ENCODE measurements at regions of chr21 and their contacts with region 1.

Region 1: DNA sequence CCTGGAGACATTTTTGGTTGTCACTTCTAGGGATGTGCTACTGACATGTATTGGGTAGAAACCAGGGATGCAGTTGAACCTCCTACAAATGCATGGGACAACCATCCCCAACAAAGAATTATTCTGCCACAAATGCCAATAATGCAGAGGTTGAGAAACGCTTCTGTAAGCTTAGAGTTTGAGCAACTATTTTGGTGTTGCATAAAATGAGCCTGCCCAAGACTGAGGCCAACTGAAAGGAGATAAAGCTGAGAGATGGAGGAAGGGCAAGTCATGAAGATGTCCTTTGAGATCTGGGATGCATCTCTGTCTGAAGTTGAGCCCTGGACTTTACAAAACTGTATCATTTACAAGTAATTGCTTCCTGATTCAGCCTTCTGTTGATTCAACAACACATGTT is 106.9 kb downstream of the KCNJ15 start:
- DNase-seq: no peak
- H3K4me3 ChIP-seq: no peak overlapping the region
- H3K27ac ChIP-seq: no peak overlapping the region
- H3K4me1 ChIP-seq: no peaks in the 10 kb centered on the region
- H3K27me3 ChIP-seq: no peaks in the 10 kb centered on the region
- CTCF ChIP-seq: no peak

Region 2: DNA sequence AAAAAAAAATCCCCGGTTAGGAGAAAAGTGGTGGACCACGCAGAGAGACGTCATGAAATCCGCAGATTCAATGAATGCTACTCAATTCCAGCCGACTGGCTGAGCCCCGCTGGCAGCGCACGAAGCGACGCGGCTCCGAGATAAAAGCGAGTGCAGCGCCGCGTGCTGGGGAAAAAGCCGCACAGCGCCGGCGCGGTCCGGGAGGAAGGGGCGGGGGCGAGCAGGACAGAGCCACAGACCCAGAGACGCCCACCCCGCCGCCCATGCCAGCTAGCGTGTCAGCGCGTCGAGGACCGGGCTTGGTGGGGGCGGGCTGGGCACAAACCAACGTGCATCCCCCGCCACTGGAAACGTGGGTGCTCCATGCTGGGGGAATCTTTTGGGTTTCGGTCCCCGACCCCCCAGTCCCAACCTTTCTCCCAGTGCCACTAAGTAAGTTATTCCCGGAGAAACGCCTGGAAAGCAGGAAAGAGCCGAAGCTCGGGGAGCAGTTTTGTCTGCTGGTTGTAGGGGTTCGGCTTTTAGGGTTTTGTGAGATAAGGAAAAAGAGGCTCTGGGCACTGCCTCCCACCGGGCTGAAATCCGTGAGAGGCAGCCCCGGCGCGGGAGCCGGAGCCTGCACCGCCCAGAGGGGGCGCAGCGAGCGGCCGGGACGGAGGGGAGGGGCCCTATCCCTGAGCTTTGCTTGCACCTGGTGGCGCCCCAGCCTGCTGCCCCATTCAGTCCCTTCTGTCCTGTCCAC is 447.2 kb before region 1 on chr21 and contains the start of gene KCNJ6:
- intact Hi-C with region 1: loop called (anchors 10 kb)
- DNase-seq: no peak
- H3K4me3 ChIP-seq: peak within 1 kb of the TSS; percentile 31 to 56
- H3K27ac ChIP-seq: no peak within 1 kb of the TSS
- H3K4me1 ChIP-seq: peaks cover 6 to 14% of the 10 kb centered on the region in 2 donors
- H3K27me3 ChIP-seq: peaks cover 28% of the 10 kb centered on the region
- CTCF ChIP-seq: peak; percentile 18 to 42 (median 27)
- total RNA-seq, gene KCNJ6: 0.64 TPM

Region 3: GRCh38 chr21:38244885-38245545 is 118.7 kb before region 1 on chr21:
- intact Hi-C with region 1: no loop called
- DNase-seq: no peak
- H3K4me3 ChIP-seq: no peak overlapping the region
- H3K27ac ChIP-seq: peak overlapping the region in 1 of 2 donors; percentile 70
- H3K4me1 ChIP-seq: peaks cover 21 to 25% of the 10 kb centered on the region in 2 donors
- H3K27me3 ChIP-seq: no peaks in the 10 kb centered on the region
- CTCF ChIP-seq: no peak